Activated CD4-positive, alpha-beta T cell treated with anti-CD3 and anti-CD28 coated beads, Interleukin-2, amount 10 ng/mL, durations not matched to agents 24 days and 14 days (primary cell): ENCODE measurements at regions of chr3 and their contacts with region 1.

Region 1: GRCh38 chr3:133040696-133041523 is 2.7 kb downstream of the TMEM108 start:
- DNase-seq: peak; percentile 69
- H3K4me3 Mint-ChIP-seq: no peak overlapping the region
- H3K27ac Mint-ChIP-seq: no peak overlapping the region
- H3K4me1 Mint-ChIP-seq: no peaks in the 10 kb centered on the region
- H3K27me3 Mint-ChIP-seq: peaks cover 35% of the 10 kb centered on the region

Region 2: GRCh38 chr3:133384331-133385027 is 343.6 kb after region 1 on chr3:
- intact Hi-C with region 1: loop called (anchors 5 kb)
- DNase-seq: peak; percentile 75
- H3K4me3 Mint-ChIP-seq: no peak overlapping the region
- H3K27ac Mint-ChIP-seq: no peak overlapping the region
- H3K4me1 Mint-ChIP-seq: no peaks in the 10 kb centered on the region
- H3K27me3 Mint-ChIP-seq: peaks cover 2% of the 10 kb centered on the region

Region 3: GRCh38 chr3:133426721-133427120 is 385.8 kb after region 1 on chr3:
- intact Hi-C with region 1: loop called (anchors 2 kb)
- DNase-seq: no peak
- H3K4me3 Mint-ChIP-seq: no peak overlapping the region
- H3K27ac Mint-ChIP-seq: no peak overlapping the region
- H3K4me1 Mint-ChIP-seq: peaks cover 5% of the 10 kb centered on the region
- H3K27me3 Mint-ChIP-seq: no peaks in the 10 kb centered on the region